GM10248 (cell line): ENCODE measurements at regions of chr13 and their contacts with region 1.

Region 1: DNA sequence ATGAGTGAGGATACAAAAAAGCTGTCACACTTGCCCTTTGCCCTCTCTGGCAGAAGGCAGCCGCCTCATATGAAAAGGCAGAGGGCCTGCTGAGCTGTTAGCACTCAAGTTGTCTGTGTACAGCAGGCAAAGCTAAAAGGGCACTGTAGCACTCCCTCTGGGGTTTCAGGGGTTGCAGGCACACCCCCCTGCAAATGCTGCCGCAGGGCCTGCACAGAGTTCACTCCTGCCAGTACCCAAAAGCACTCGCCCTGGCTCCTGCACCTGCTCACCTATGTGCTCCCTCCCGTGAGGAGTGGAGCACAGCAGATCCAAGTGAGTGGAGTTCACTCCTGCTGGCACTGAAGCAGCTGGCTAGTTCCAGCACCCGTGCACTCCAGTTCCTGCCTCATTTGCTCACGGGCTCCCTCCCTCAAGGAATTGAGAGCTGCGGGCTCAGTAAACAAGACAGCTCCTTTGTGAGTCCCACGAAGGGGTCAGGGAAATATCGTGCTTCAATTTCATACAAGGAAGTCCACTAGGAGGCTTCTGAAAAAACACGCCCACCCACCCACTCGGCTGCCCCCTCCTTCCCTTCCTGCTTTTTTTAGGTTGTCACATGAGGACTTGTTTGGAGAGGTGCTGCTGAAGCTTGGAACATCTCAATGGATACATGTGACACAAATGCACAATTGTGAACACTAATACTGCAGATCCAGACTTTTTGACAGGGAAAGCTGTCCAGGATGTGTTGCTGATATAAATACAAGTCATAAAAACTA is 9.9 kb upstream of the RCBTB2 start:
- DNase-seq: no peak
- CTCF ChIP-seq: no peak

Region 2: GRCh38 chr13:48562296-48563066 is 19.7 kb after region 1 on chr13:
- CTCF ChIA-PET with region 1: interaction called, 10 read pairs
- POLR2A ChIA-PET with region 1: no interaction called
- DNase-seq: peak; percentile 77
- CTCF ChIP-seq: no peak